Activated CD8-positive, alpha-beta T cell treated with anti-CD3 and anti-CD28 coated beads for 36 hours (primary cell): ENCODE measurements at regions of chr10 and their contacts with region 1.

Region 1: DNA sequence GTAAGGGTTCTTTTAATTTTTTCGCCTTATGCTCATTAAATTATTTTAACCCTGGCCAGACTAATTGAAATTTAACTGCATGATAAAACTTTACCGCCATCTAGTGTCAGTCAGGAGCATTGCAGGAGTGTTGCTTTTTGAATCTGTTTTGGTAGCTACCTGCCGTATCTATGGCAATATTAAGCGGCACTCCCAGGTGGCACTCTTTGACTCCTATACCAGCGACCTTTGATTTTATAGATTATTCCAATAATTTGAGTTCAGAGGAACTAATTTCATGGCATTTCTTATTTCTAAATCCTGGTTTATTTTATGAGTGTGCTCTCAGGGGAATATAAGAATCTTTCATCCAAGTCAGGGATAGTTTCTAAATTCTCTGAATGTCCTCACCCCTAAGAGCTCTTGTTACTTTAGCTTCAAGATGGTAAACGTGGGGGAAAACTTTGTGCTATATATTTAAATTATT is 198.9 kb downstream of the REEP3 start:
- DNase-seq: peak; percentile 66
- ATAC-seq: peak; percentile 86
- H3K4me3 Mint-ChIP-seq: no peak overlapping the region
- H3K27ac Mint-ChIP-seq: no peak overlapping the region
- H3K4me1 Mint-ChIP-seq: peaks cover 13% of the 10 kb centered on the region
- H3K27me3 Mint-ChIP-seq: peaks cover 7% of the 10 kb centered on the region
- CTCF ChIP-seq: peak; percentile 99

Region 2: GRCh38 chr10:63157845-63158624 is 562.1 kb before region 1 on chr10:
- CTCF ChIA-PET with region 1: interaction called, 215 read pairs
- POLR2A ChIA-PET with region 1: interaction called, 3 read pairs
- intact Hi-C with region 1: no loop called
- DNase-seq: peak; percentile 41
- ATAC-seq: peak; percentile 85
- H3K4me3 Mint-ChIP-seq: no peak overlapping the region
- H3K27ac Mint-ChIP-seq: no peak overlapping the region
- H3K4me1 Mint-ChIP-seq: peaks cover 4% of the 10 kb centered on the region
- H3K27me3 Mint-ChIP-seq: no peaks in the 10 kb centered on the region
- CTCF ChIP-seq: peak; percentile 93

Region 3: DNA sequence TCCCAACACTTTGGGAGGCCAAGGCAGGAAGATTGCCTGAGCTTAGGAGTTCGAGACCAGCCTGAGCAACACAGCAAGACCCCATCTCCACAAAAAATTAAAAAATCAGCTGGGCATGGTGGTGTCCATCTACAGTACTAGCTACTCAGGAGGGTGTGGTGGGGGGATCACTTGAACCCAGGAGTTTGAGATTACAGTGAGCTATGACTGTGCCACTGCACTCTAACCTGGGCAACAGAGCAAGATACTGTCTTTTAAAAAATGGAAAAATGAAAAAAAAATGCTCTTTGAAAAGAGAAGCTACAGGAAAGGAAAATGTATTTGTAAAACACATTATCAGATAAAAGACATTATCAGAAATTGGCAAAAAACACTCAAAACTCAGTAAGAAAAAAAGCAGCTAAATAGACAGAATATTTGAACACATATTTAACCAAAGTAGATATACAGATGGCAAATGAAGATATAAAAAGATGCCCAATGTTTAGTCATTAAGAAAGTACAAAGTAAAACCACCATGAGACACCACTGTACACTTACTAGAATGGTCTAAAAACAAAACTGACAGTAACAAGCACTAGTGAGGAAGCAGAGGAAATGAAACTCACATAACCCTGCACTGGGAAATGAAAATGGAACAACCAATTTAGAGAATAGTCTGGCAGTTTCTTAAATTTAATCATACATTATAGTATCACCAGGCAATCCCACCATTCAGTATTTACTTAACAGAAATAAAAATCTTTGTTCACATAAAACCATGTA is 546.5 kb before region 1 on chr10:
- CTCF ChIA-PET with region 1: interaction called, 215 read pairs
- POLR2A ChIA-PET with region 1: no interaction called
- intact Hi-C with region 1: loop called (anchors 5 kb)
- DNase-seq: no peak
- ATAC-seq: peak; percentile 96
- H3K4me3 Mint-ChIP-seq: no peak overlapping the region
- H3K27ac Mint-ChIP-seq: peak overlapping the region; percentile 82
- H3K4me1 Mint-ChIP-seq: peaks cover 65% of the 10 kb centered on the region
- H3K27me3 Mint-ChIP-seq: no peaks in the 10 kb centered on the region
- CTCF ChIP-seq: no peak

Region 4: GRCh38 chr10:63521416-63522276 is 198.5 kb before region 1 on chr10:
- CTCF ChIA-PET with region 1: interaction called, 11 read pairs
- POLR2A ChIA-PET with region 1: no interaction called
- intact Hi-C with region 1: no loop called
- DNase-seq: peak; percentile 60
- ATAC-seq: peak; percentile 65
- H3K4me3 Mint-ChIP-seq: peak overlapping the region; percentile 88
- H3K27ac Mint-ChIP-seq: peak overlapping the region; percentile 92
- H3K4me1 Mint-ChIP-seq: peaks cover 51% of the 10 kb centered on the region
- H3K27me3 Mint-ChIP-seq: no peaks in the 10 kb centered on the region
- CTCF ChIP-seq: no peak

Region 5: DNA sequence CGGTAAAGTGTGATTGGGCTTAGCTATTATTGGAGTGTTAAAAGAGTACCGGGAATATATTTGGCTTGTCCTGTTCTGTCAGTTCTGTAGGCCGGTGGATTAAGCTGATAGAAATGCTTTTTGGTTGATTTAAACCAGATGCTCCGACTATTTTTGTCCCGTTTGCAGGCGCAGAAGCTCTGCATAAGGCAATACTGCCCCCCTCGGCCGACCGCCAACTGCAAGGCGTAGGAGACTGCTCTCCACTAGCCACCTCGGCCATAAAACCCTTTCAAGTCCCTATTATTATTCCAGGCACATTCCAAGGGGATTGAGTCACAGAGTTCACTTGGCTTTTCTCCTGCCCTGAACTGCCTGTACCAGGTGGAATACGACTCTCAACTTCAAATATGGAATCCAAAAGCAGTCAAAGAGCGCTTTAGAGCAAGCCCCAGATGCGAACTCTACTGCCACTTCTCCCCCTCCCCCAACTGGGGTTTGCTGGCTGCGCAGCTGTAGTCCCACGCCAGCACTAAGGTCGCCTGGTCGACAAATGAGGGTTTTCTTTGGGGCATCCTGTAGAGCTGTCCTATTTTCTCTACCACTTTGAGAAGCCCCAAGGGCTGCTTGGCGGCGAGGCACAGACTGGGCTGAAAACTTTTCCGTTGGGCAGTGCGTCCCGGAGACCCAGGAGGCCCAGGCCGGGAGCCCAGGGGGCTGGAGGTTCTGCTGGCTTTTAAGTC is 90.6 kb before region 1 on chr10:
- CTCF ChIA-PET with region 1: interaction called, 106 read pairs
- POLR2A ChIA-PET with region 1: interaction called, 4 read pairs
- intact Hi-C with region 1: loop called (anchors 5 kb)
- DNase-seq: peak; percentile 92
- ATAC-seq: peak; percentile 74
- H3K4me3 Mint-ChIP-seq: peak overlapping the region; percentile 78
- H3K27ac Mint-ChIP-seq: peak overlapping the region; percentile 86
- H3K4me1 Mint-ChIP-seq: peaks cover 25% of the 10 kb centered on the region
- H3K27me3 Mint-ChIP-seq: peaks cover 3% of the 10 kb centered on the region
- CTCF ChIP-seq: peak; percentile 90

Region 6: DNA sequence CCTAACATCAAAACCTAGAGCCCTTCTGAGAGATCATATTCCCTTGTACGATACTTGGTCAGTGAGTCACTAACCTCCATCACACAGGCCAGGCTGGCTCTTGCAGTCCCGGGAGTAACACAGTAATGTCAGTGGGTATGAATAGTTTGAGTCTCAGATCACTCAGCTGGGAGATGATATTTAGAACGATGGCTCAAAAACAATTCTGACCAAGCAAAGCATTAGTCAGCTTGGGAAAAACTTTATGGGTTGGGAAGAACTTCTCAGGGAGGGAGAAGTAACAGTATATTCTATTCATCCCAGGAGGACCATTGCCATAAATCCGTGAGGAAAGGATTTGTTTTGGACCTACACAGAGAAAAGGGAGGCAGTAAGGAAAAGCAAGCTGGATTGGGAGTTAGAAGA is 19.9 kb before region 1 on chr10:
- CTCF ChIA-PET with region 1: interaction called, 14 read pairs
- POLR2A ChIA-PET with region 1: interaction called, 5 read pairs
- intact Hi-C with region 1: no loop called
- DNase-seq: peak; percentile 50
- ATAC-seq: peak; percentile 91
- H3K4me3 Mint-ChIP-seq: no peak overlapping the region
- H3K27ac Mint-ChIP-seq: no peak overlapping the region
- H3K4me1 Mint-ChIP-seq: peaks cover 12% of the 10 kb centered on the region
- H3K27me3 Mint-ChIP-seq: no peaks in the 10 kb centered on the region
- CTCF ChIP-seq: no peak

Region 7: GRCh38 chr10:63735305-63735704 is 15.2 kb after region 1 on chr10:
- CTCF ChIA-PET with region 1: interaction called, 35 read pairs
- POLR2A ChIA-PET with region 1: no interaction called
- intact Hi-C with region 1: no loop called
- DNase-seq: no peak
- ATAC-seq: no peak
- H3K4me3 Mint-ChIP-seq: no peak overlapping the region
- H3K27ac Mint-ChIP-seq: no peak overlapping the region
- H3K4me1 Mint-ChIP-seq: no peaks in the 10 kb centered on the region
- H3K27me3 Mint-ChIP-seq: no peaks in the 10 kb centered on the region
- CTCF ChIP-seq: no peak